H1 (cell line): ENCODE measurements at regions of chr1 and their contacts with region 1.

Region 1: GRCh38 chr1:201436393-201436792 is 14.9 kb upstream of the TNNI1 start:
- DNase-seq: peak in 1 of 2 experiments; percentile 63
- H3K4me3 ChIP-seq: no peak overlapping the region
- H3K27ac ChIP-seq: no peak overlapping the region
- H3K4me1 ChIP-seq: peaks cover 0 to 7% (median 3%) of the 10 kb centered on the region in 4 experiments; a peak in 3 of 7 replicates
- H3K27me3 ChIP-seq: no peaks in the 10 kb centered on the region
- CTCF ChIP-seq: peak; percentile 39 to 55 (median 49); a peak in 3 of 4 replicates
- EP300 ChIP-seq: no peak
- POLR2A ChIP-seq: no peak
- RAD21 ChIP-seq: peak; percentile 29 to 54

Region 2: DNA sequence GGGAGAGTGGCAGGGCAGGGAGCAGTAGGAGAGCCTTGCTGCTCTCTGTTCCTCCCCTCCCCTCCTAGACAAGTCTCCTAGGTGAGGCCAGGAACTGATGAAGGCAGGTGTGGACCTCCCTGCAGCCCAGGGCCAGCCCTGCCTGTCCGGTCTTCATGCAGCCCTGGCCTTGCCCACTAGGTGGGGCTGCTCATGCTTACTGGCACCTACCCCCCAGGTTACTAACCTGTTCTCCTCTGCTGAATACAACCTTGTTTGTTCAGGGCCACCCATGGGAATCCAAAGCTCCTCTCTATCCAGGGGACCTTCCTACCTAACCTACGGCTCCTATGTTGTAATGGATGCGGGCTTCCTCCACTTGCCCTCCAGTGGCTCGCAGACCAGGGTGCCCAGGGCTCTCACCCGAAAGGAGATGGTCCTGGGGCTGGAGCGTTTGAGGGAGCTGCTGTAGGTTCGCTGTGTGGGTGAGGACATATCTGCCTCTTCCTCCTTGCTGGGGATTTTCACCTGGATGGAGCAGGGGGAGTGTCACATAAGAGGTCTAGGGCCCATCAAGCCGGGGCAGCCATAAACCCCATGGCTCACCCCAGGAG is 51.0 kb before region 1 on chr1:
- CTCF ChIA-PET with region 1: interaction called, 28 read pairs
- POLR2A ChIA-PET with region 1: no interaction called
- DNase-seq: peak; percentile 38 to 95
- H3K4me3 ChIP-seq: no peak overlapping the region
- H3K27ac ChIP-seq: no peak overlapping the region
- H3K4me1 ChIP-seq: peaks cover 0 to 2% (median 0%) of the 10 kb centered on the region in 4 experiments; a peak in 1 of 7 replicates
- H3K27me3 ChIP-seq: no peaks in the 10 kb centered on the region
- CTCF ChIP-seq: peak; percentile 92 to 99 (median 98)
- EP300 ChIP-seq: no peak
- POLR2A ChIP-seq: no peak
- RAD21 ChIP-seq: peak; percentile 74 to 84

Region 3: DNA sequence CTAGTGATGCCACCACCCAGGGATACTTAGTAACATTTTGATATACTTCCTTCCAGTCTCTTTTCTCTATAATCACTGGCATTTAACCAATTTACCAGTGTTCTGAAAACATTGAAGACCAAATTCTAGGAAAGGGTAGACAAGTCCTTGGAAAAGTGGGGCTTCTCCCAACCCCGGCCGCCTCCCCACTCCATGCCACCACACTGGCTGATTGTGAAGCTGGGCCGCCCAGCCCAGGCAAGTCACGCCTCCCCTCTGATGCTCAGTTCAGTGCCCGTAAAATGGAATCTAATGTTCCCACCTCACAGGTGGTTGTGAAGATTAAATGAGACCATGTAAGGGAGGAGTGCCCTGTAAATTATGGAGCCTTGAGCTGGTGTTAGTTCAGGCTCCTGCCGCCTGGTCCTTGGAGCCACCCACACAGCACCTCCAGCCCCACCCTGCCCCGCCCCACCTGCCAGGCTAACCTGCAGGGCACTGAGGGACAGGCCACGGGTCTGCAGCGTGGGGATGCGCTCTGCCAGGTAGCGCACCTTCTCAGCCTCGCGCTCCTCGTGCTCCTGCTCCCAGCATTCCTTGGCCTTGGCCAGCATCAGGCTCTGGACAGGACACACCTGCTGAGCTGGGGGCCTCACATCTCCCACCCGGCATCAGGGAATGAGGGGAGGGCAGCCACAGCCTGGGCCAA is 22.2 kb before region 1 on chr1:
- CTCF ChIA-PET with region 1: interaction called, 31 read pairs
- POLR2A ChIA-PET with region 1: no interaction called
- DNase-seq: no peak
- H3K4me3 ChIP-seq: no peak overlapping the region
- H3K27ac ChIP-seq: no peak overlapping the region
- H3K4me1 ChIP-seq: no peaks in the 10 kb centered on the region
- H3K27me3 ChIP-seq: no peaks in the 10 kb centered on the region
- CTCF ChIP-seq: no peak
- EP300 ChIP-seq: no peak
- POLR2A ChIP-seq: no peak
- RAD21 ChIP-seq: no peak

Region 4: GRCh38 chr1:201456499-201457309 is 20.3 kb after region 1 on chr1:
- CTCF ChIA-PET with region 1: interaction called, 163 read pairs
- POLR2A ChIA-PET with region 1: interaction called, 4 read pairs
- DNase-seq: no peak
- H3K4me3 ChIP-seq: no peak overlapping the region
- H3K27ac ChIP-seq: no peak overlapping the region
- H3K4me1 ChIP-seq: peaks cover 2 to 9% (median 5%) of the 10 kb centered on the region in 4 experiments
- H3K27me3 ChIP-seq: no peaks in the 10 kb centered on the region
- CTCF ChIP-seq: no peak
- EP300 ChIP-seq: no peak
- POLR2A ChIP-seq: no peak
- RAD21 ChIP-seq: no peak

Region 5: DNA sequence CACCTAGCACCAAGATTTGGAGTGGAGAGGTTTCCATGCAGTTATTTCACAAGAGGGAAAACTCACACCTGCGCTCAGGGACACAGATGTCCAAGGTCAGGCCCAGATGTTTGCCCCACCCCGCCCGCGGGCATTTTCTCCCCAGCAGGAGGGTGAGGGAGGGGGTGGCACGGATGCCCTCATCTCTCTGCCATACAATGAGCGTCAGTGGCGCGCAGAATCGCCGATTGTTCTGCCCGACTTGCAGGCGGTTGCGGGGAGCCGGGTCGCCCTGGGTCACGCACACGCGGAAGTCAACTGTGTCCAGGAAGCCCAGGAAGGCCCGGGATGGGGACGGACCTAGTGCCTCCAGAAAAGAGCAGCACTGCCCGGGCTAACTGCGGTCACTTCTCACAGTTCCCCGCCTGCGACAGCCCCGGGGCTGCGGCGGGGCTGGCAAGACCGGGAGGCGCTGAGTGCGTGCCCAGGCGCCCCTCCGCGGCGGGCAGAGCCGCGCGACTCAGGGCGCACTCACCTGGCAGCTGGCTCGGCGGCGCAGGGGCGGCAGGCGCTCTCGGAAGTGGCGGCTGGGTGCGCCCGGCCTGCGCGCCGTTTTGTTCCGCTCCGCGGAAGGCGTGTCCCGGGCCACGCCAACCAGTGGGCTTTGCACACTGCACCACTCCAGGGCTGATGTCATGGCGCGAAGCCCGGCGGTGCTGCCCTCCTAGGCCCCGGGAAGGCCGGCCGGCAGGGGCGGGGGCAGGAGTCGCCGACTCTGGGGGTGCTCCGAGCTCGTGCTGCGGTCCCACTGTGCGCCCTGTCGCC is 70.4 kb after region 1 on chr1 and contains the start of gene CSRP1:
- CTCF ChIA-PET with region 1: interaction called, 26 read pairs
- POLR2A ChIA-PET with region 1: no interaction called
- DNase-seq: no peak
- H3K4me3 ChIP-seq: peak within 1 kb of the TSS; percentile 36 to 61 (median 43)
- H3K27ac ChIP-seq: no peak within 1 kb of the TSS
- H3K4me1 ChIP-seq: peaks cover 8 to 24% (median 16%) of the 10 kb centered on the region in 4 experiments
- H3K27me3 ChIP-seq: peaks cover 3 to 33% (median 21%) of the 10 kb centered on the region in 4 experiments
- CTCF ChIP-seq: peak in 1 of 3 experiments; percentile 8; a peak in 1 of 4 replicates
- EP300 ChIP-seq: no peak
- POLR2A ChIP-seq: 0 out of 3 replicates have a peak, but pooled peaks of 1 of the 2 experiments have one; percentile 37
- RAD21 ChIP-seq: no peak
- total RNA-seq, gene CSRP1: 22.3 and 24.1 TPM in 2 replicates

Region 6: DNA sequence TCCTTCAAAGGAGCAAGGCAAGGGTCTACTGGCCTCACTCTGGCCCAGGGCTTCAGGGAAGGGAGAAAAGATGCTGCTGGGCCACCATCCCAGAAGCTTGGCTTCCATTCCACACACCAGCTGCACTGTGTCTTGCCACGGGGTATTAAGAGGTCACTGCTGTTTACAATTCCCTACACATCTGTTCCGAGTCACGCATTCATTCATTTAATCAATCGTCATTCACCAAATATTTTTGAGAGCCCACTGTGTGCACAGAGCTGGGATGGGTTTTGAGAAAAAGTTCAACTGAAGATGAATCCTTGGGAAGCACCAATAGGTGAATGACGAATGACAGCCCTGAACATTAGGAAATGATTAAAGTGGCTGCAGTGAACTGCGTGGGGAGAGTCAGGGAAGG is 204.2 kb after region 1 on chr1:
- CTCF ChIA-PET with region 1: no interaction called
- POLR2A ChIA-PET with region 1: no interaction called
- DNase-seq: no peak
- H3K4me3 ChIP-seq: no peak overlapping the region
- H3K27ac ChIP-seq: no peak overlapping the region
- H3K4me1 ChIP-seq: peaks cover 3 to 11% (median 4%) of the 10 kb centered on the region in 4 experiments; a peak in 6 of 7 replicates
- H3K27me3 ChIP-seq: no peaks in the 10 kb centered on the region; a peak in 1 of 7 replicates
- CTCF ChIP-seq: no peak
- EP300 ChIP-seq: no peak
- POLR2A ChIP-seq: no peak
- RAD21 ChIP-seq: no peak

Region 7: GRCh38 chr1:201719812-201720521 is 283.6 kb after region 1 on chr1:
- CTCF ChIA-PET with region 1: no interaction called
- POLR2A ChIA-PET with region 1: no interaction called
- DNase-seq: no peak
- H3K4me3 ChIP-seq: no peak overlapping the region
- H3K27ac ChIP-seq: 0 out of 2 replicates have a peak overlapping the region, but pooled peaks have one; percentile 1
- H3K4me1 ChIP-seq: peaks cover 0 to 12% (median 6%) of the 10 kb centered on the region in 4 experiments; a peak in 6 of 7 replicates
- H3K27me3 ChIP-seq: no peaks in the 10 kb centered on the region
- CTCF ChIP-seq: no peak
- EP300 ChIP-seq: no peak
- POLR2A ChIP-seq: no peak
- RAD21 ChIP-seq: no peak